ENCODE measurements at regions of chr18 and their contacts with region 1.

Region 1: DNA sequence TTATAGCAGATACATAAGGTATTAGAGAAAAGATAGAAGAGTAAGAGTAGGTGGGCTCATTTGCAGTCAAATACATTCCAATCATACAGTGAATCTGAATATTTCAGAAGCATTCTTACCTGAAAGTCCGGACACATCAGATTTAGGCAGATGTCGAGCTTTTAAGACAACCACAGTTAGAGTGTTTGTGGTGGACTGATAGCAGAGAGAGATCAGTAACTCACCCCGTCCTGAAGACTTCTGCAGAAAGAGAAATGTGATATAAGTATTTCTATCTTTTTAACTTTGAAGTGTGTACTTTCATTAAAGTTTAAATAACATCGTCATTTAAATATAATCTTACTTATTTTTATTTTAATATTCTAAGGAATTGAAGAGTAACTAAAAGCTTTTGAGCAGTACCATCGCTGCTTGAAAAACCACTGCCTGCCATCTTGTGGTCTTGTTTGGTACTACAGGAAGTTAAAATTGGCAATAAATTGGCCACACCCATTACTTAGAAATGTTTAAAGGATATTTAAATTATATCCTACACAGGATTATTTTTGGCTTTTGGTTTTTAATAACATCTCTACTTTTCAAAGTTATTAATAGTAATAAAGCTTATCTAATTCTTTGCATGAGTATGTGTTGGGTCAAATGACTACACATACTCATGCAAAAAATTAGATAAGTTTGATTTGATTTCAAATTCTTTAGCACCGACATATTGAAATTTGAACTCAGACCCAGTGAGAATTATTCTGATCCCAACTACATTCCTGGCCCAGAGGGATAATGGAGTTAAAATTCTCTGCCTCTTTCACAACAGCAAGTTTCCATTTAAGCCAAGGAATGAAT is 5.5 kb downstream of the SYT4 start:
- DNase-seq: peak; percentile 23
- H3K4me3 ChIP-seq: no peak overlapping the region
- H3K27ac ChIP-seq: no peak overlapping the region
- H3K4me1 ChIP-seq: no peaks in the 10 kb centered on the region
- H3K27me3 ChIP-seq: no peaks in the 10 kb centered on the region
- CTCF ChIP-seq: peak; percentile 71

Region 2: DNA sequence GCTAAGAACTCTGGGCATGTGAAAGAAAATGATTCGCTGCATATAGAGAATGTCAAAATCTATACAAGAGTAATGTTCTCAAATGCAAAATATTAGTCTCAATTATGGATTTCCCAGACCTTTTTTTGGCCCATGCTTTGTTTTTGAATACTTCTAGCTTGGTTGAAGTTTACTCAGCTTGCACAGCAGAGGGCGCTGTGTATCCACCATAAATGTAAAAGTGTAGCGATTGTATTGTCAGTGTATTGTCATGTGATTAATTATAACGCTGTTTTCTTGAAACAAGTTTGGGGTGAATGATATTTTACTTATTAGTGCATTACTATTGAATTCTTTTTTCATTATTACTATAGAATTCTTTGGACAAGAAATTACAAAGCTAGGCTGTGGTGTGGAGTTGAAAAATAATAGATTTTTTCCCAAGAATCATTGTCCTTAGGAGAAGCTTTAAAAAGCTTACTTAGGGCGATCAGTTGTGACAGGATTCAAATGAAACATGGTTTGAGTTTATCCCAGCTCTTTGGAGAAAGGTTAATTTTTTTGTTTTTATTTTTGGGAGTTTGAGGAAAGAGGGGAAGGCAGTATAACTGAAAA is 1218.5 kb before region 1 on chr18:
- intact Hi-C with region 1: loop called (anchors 5 kb)
- DNase-seq: peak; percentile 50
- H3K4me3 ChIP-seq: no peak overlapping the region
- H3K27ac ChIP-seq: no peak overlapping the region
- H3K4me1 ChIP-seq: no peaks in the 10 kb centered on the region
- H3K27me3 ChIP-seq: no peaks in the 10 kb centered on the region
- CTCF ChIP-seq: peak; percentile 71

Region 3: DNA sequence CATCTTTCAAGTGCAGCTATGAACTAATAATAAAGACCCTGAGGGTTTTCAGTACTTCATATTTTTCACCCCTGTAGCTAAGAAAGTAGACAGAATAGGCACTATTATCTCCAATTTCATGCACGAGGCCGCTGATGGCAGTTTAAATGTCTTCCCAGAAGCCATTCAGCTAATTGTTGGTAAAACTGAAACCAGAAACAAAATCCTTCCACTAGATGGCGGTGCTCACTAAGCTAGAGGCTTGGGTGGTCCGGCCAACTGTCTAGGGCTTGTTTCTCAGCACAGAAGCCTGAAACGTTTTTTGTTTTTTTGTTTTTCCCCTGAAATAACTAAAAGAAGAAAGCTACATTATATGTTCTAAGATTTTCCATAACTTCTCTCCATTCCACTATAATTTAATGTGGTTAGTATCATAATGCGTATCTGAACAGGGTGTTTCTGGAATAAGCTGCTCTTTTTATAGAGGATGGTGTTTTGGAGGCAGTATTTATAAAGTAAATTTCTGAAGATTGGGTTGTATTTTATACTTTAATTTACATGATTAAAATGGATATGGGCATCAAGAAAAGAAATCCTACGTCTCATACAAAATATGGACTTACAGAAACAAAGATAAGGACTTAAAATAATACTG is 1157.4 kb before region 1 on chr18:
- intact Hi-C with region 1: loop called (anchors 5 kb)
- DNase-seq: peak; percentile 69
- H3K4me3 ChIP-seq: no peak overlapping the region
- H3K27ac ChIP-seq: no peak overlapping the region
- H3K4me1 ChIP-seq: peaks cover 6% of the 10 kb centered on the region
- H3K27me3 ChIP-seq: no peaks in the 10 kb centered on the region
- CTCF ChIP-seq: peak; percentile 77

Region 4: DNA sequence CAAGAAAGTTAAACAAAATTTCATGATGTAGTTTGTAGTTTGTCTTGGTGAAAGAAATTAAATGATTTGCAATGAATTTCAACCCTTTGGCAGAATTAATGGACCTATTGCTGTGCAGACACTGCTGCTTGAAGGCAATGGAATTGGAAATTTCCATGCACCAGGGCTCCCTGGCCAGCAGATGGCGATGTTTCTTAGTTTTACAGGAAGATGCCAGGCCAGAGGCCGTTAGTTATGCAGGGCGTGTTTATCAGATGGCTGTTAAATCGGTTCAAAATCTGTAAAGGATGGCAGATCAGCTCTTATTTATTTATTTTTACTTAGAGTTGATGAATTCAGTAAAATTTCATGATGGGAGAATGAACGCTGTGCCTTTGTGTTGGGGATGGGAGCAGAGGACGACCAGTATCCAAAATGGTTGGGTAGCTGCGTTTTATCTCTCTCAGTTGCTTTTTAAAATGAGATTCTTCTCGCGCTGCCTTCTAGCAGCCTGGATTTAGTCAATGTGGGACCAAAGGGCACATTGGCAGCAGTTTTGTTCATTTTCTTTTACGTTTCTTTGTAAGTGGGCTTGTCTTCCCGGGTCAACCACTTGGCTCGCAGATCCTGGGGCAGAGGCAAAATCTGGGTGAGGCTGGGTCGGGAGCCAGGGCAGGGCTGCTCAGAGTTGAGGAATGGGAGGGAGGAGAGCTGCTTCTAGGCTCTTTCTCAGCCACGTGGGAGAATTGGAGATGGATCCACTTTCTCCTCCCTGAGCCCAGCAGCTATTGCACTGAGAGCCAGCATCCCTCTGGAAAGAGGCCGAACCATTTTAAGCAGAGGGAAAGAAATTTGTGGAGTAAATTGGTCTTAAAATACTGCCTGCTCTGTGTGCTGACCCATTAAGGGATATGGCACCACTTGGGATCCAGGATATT is 972.8 kb before region 1 on chr18:
- intact Hi-C with region 1: loop called (anchors 10 kb)
- DNase-seq: peak; percentile 72
- H3K4me3 ChIP-seq: no peak overlapping the region
- H3K27ac ChIP-seq: no peak overlapping the region
- H3K4me1 ChIP-seq: no peaks in the 10 kb centered on the region
- H3K27me3 ChIP-seq: no peaks in the 10 kb centered on the region
- CTCF ChIP-seq: peak; percentile 94

Measured in colonic mucosa (tissue), 4 donors.